Prostate gland (tissue), 2 donors: ENCODE measurements at regions of chr10 and their contacts with region 1.

Region 1: GRCh38 chr10:63083904-63084689 is 49.0 kb upstream of the NRBF2 start:
- DNase-seq: peak; percentile 52
- H3K4me3 ChIP-seq: no peak overlapping the region
- H3K27ac ChIP-seq: no peak overlapping the region
- H3K4me1 ChIP-seq: no peaks in the 10 kb centered on the region
- H3K27me3 ChIP-seq: no peaks in the 10 kb centered on the region
- CTCF ChIP-seq: peak in 3 of 4 experiments; percentile 49 to 71 (median 66)
- POLR2A ChIP-seq: no peak

Region 2: GRCh38 chr10:62594093-62594520 is 490.0 kb before region 1 on chr10:
- intact Hi-C with region 1: loop called (anchors 10 kb)
- DNase-seq: peak; percentile 23
- H3K4me3 ChIP-seq: no peak overlapping the region
- H3K27ac ChIP-seq: no peak overlapping the region
- H3K4me1 ChIP-seq: no peaks in the 10 kb centered on the region
- H3K27me3 ChIP-seq: no peaks in the 10 kb centered on the region
- CTCF ChIP-seq: peak; percentile 35 to 85 (median 73)
- POLR2A ChIP-seq: no peak